Endothelial cell of umbilical vein (primary cell): ENCODE measurements at regions of chrX and their contacts with region 1.

Region 1: DNA sequence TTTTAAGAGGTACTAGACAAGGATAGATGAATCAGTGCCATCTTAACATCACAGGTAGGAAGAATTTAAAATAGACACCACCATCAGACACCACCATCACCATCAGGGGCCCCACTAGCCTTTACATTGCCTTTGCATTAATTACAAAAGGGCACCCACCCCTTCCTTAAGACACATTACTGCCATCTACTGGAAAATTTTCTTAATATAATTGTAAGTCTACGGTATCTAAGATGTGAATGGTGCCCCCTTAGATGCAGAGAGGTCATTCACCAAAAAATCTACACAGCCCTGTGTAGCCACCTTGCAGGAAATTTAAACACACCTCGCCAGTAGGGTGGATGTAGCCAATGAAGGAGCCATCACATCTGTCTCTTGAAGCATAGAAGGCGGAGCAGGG is 184.1 kb downstream of the MID1IP1 start:
- DNase-seq: peak; percentile 1
- H3K4me3 ChIP-seq: no peak overlapping the region
- H3K27ac ChIP-seq: no peak overlapping the region
- H3K4me1 ChIP-seq: no peaks in the 10 kb centered on the region
- H3K27me3 ChIP-seq: peaks cover 0 to 2% of the 10 kb centered on the region in 2 experiments
- CTCF ChIP-seq: no peak
- POLR2A ChIP-seq: no peak

Region 2: DNA sequence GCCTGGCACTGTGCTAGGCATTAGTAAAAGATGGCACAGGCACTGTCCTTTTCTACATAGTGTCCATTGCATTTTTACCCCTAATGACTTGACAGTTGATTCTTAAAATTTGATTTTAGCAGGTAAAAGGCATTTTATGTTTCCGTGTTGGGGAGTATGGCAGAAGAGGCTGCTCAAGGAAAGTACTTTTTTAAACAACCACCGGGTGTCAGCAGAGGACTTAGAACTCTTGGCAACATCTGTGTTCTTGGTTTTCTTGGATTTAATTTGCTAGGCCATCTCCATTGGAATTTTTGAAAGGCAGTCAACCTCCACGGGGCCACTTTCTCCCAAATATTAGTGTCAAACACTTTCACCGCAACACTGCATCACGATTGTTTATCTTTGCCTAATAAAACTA is 321.1 kb before region 1 on chrX:
- CTCF ChIA-PET with region 1: no interaction called
- POLR2A ChIA-PET with region 1: no interaction called
- dilution Hi-C with region 1: no loop called
- intact Hi-C with region 1: loop called (anchors 5 kb)
- DNase-seq: peak; percentile 20
- H3K4me3 ChIP-seq: no peak overlapping the region
- H3K27ac ChIP-seq: no peak overlapping the region
- H3K4me1 ChIP-seq: no peaks in the 10 kb centered on the region
- H3K27me3 ChIP-seq: no peaks in the 10 kb centered on the region
- CTCF ChIP-seq: peak in 1 of 2 donors; percentile 26
- POLR2A ChIP-seq: no peak

Region 3: DNA sequence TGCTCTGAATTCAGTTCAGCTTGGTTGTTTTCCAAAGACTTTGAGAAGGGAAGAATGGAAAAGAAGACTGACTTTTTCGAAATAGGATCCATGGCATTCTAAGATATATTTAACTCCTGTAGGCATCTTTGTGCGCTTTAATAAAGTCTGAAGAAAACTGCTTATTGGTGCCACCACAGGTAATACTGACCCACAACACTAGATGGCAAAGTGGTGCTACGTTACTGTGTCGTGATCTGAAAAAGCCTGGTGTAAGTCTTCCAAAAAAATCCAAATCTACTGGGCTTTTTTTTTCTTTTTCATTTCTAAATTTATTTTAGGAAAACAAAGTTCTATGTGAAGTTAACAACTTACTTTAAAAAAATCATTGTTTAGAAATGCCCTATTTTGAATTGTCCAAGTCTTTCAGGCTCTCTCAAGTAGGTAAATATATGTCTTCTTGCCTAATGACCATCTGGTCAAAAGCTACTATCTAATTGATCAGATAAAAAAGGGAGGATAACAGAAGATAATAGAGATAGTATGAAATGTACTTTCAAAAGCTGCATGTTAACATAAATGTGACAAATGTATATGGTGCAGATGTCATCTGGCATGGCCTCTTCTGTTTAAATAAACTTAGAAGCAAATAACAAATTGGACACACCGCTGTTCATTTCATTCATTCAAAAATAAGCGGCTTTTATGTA is 231.1 kb before region 1 on chrX:
- CTCF ChIA-PET with region 1: interaction called, 5 read pairs
- POLR2A ChIA-PET with region 1: no interaction called
- dilution Hi-C with region 1: no loop called
- intact Hi-C with region 1: loop called (anchors 1 kb)
- DNase-seq: peak; percentile 62
- H3K4me3 ChIP-seq: no peak overlapping the region
- H3K27ac ChIP-seq: no peak overlapping the region
- H3K4me1 ChIP-seq: no peaks in the 10 kb centered on the region
- H3K27me3 ChIP-seq: peaks cover 0 to 2% of the 10 kb centered on the region in 2 experiments
- CTCF ChIP-seq: peak; percentile 33 to 46
- POLR2A ChIP-seq: no peak

Region 4: DNA sequence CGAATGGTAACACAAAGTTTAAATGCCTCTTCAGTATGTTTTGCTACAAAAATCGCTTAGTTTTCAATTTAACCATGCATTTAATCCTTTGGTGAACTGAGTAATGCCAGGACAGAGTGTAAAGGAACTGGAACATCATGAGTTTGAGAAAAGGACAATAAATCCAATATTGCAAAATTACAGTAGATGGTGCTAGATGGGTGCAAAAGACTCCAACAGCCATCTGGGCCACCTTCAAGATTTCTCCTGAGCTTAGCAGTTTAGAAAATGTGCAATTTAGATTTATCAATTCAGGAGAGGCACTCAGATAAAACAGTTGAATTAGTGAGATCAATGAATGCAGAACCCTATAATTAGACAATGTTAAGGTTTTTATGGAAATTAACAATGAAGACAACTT is 217.3 kb before region 1 on chrX:
- CTCF ChIA-PET with region 1: interaction called, 37 read pairs
- POLR2A ChIA-PET with region 1: no interaction called
- dilution Hi-C with region 1: no loop called
- intact Hi-C with region 1: loop called (anchors 1 kb)
- DNase-seq: peak; percentile 15
- H3K4me3 ChIP-seq: no peak overlapping the region
- H3K27ac ChIP-seq: no peak overlapping the region
- H3K4me1 ChIP-seq: no peaks in the 10 kb centered on the region
- H3K27me3 ChIP-seq: peaks cover 0 to 4% of the 10 kb centered on the region in 2 experiments
- CTCF ChIP-seq: no peak
- POLR2A ChIP-seq: no peak

Region 5: DNA sequence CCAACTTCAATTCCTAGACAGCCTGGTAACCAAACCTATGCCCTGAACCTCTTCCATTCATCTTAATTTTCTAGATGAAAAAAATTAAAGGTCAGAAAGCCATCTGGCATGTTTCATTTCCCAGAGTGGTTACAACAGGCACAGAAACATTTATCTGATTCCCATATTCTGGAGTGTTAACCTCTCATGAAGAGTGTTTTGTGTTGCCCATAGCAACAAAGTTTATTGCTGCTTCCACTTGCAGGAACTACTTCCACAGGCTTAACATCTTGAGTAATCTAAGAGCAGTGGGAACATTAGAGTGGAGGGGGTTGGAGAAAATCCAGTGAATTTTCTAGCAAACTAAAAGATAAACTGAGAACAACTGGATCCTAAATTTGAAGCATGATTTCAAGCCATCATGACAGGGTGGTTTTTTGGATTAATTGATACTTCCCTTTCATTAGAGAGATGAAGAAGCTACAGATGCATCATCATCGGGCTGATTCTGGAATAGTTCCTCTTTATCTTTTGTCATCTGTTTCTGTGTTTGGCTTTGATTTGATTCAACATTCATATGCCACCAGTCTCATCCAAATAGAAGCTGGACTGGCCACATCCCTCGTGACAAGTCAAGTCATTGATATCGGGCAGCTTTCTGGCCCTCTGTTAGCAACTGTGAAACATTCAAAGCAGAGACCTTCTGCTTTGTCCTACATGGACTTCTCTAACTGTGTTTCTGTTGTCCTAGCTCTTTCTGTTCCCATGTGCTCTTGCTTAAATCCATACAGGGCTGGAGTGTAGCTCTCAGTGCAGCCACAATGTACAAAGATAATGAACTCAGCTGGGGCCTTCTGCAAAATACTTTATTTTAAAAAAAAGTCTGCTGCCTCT is 16.8 kb before region 1 on chrX:
- CTCF ChIA-PET with region 1: no interaction called
- POLR2A ChIA-PET with region 1: no interaction called
- dilution Hi-C with region 1: no loop called
- intact Hi-C with region 1: no loop called
- DNase-seq: no peak
- H3K4me3 ChIP-seq: no peak overlapping the region
- H3K27ac ChIP-seq: no peak overlapping the region
- H3K4me1 ChIP-seq: no peaks in the 10 kb centered on the region
- H3K27me3 ChIP-seq: no peaks in the 10 kb centered on the region
- CTCF ChIP-seq: no peak
- POLR2A ChIP-seq: no peak